Body of pancreas (tissue), 4 donors: ENCODE measurements at regions of chr11 and their contacts with region 1.

Region 1: DNA sequence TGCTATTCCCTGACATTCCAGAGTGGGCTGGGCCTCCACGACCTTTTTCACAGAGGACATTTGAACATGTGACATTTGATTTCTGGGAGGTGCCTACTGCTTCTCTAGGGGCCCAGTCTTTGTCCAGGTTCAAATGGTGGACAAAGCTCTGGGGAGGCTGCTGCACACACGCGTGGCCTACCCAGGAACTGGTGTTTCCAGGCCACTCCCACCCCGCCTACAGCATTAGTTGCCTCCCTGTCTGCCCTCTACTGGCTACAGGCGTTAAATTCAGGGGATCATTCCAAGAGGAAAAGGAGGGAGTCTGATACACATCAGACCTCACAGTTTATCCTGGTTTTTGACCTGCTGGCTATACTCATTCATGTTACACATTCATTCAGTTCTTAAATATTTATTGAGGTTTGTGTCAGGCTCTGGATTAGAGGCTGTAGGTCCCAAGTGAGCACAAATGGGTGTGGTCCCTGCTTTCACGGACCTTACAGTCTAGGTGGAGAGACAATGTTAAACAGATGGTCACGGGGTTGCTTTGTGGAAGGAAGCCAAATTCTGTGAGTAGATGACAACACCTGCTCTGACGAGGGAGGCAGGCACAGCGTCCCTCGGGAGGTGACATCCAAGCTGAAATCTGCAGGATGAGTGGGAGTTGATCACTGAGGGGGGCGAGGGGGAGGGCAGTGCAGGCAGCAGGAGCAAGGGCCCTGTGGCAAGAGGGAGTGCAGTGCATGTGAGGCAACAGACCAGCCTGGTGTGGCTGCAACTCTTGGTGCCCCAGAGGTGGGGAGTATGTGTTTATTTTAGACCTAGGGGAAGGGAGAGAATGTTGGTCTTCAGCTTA is 11.8 kb downstream of the TUB start:
- DNase-seq: peak; percentile 69 to 81 (median 78)
- ATAC-seq: peak; percentile 73
- H3K4me3 ChIP-seq: no peak overlapping the region
- H3K27ac ChIP-seq: no peak overlapping the region
- H3K4me1 ChIP-seq: no peaks in the 10 kb centered on the region
- H3K27me3 ChIP-seq: no peaks in the 10 kb centered on the region
- CTCF ChIP-seq: peak in 6 of 7 experiments; percentile 45 to 73 (median 63)
- POLR2A ChIP-seq: no peak

Region 2: GRCh38 chr11:8038393-8038792 is 54.4 kb before region 1 on chr11:
- intact Hi-C with region 1: loop called (anchors 5 kb)
- DNase-seq: no peak
- ATAC-seq: no peak
- H3K4me3 ChIP-seq: no peak overlapping the region
- H3K27ac ChIP-seq: no peak overlapping the region
- H3K4me1 ChIP-seq: peaks cover 1% of the 10 kb centered on the region
- H3K27me3 ChIP-seq: no peaks in the 10 kb centered on the region
- CTCF ChIP-seq: no peak
- POLR2A ChIP-seq: no peak

Region 3: DNA sequence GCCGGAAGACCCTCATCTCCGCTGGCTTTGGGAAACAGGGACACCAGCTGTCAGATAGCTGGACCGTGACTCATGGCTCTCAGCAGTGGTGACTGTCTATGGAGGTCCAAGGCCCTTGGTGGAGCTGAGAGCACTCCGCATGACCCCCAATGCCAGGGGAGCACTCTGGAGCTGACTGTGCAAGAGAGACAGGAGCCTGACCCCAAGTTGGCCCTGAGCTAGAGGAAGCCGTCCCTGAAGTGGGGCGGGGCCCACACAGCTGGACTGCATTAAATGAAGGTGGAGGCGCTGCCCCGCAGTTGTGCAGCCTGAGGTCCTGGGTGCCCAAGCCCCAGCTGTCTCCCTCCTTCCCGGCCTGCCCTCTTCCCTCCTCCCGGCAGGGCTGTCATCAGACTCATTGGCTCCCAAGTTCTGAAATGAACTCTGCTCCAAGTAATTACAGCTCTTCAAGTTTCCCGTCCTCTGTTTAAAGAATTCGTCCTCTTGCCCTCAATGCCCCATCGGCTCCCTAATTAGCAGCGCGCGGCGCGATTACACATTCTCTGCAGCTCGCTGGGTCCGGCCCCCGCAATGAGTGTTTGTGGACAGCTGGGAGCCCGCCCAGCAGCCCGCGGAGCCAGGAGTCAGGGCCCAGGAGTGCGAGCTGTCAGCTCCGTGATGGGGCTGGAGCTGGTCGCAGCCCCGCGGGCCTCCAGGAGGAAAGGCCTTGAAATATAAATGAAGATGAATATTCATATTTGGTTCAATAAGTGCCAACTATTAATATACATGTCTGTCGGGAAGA is 264.1 kb after region 1 on chr11:
- intact Hi-C with region 1: no loop called
- DNase-seq: peak in 1 of 4 donors; percentile 19
- ATAC-seq: peak; percentile 16
- H3K4me3 ChIP-seq: no peak overlapping the region
- H3K27ac ChIP-seq: no peak overlapping the region
- H3K4me1 ChIP-seq: peaks cover 12% of the 10 kb centered on the region
- H3K27me3 ChIP-seq: no peaks in the 10 kb centered on the region
- CTCF ChIP-seq: no peak
- POLR2A ChIP-seq: no peak

Region 4: DNA sequence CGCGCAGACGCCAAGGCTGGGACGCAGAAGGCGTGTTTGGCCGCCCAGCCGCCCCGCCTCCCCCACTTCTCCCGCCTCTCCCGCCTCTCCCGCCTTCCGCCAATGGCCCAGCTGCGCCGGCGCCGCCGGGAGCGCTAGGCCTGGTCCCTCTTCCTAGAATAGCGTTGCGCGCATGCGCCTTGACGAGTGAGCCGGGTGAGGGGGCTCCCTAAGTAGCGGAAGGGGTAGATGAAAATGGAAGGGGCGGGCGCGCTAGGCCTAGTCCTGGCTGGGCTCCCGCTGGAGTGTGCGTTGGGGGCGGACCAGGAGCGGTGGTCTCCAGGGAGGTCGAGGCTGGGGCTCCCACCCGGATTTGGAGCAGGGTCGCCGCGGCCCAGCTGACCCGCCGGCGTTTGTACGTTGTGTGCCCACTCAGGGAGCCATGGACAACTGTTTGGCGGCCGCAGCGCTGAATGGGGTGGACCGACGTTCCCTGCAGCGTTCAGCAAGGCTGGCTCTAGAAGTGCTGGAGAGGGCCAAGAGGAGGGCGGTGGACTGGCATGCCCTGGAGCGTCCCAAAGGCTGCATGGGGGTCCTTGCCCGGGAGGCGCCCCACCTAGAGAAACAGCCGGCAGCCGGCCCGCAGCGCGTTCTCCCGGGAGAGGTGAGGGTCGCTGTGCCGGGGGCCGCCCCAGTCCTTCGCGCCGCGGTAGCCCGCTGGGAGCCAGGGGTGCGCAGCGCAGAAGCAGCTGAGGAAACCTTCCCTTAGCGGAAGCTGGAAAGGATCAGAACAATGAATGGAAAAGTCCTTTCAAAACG is 818.4 kb after region 1 on chr11 and contains the start of gene AKIP1:
- intact Hi-C with region 1: no loop called
- DNase-seq: peak; percentile 91 to 95 (median 94)
- ATAC-seq: peak; percentile 94
- H3K4me3 ChIP-seq: peak within 1 kb of the TSS; percentile 46 to 69
- H3K27ac ChIP-seq: peak within 1 kb of the TSS; percentile 51 to 89 (median 70)
- H3K4me1 ChIP-seq: peaks cover 33% of the 10 kb centered on the region
- H3K27me3 ChIP-seq: no peaks in the 10 kb centered on the region
- CTCF ChIP-seq: no peak
- POLR2A ChIP-seq: peak in 2 of 3 donors; percentile 61 to 68
- total RNA-seq, gene AKIP1: 8.6 to 21.0 TPM